HAP-1 (cell line): ENCODE measurements at regions of chr19 and their contacts with region 1.

Region 1: DNA sequence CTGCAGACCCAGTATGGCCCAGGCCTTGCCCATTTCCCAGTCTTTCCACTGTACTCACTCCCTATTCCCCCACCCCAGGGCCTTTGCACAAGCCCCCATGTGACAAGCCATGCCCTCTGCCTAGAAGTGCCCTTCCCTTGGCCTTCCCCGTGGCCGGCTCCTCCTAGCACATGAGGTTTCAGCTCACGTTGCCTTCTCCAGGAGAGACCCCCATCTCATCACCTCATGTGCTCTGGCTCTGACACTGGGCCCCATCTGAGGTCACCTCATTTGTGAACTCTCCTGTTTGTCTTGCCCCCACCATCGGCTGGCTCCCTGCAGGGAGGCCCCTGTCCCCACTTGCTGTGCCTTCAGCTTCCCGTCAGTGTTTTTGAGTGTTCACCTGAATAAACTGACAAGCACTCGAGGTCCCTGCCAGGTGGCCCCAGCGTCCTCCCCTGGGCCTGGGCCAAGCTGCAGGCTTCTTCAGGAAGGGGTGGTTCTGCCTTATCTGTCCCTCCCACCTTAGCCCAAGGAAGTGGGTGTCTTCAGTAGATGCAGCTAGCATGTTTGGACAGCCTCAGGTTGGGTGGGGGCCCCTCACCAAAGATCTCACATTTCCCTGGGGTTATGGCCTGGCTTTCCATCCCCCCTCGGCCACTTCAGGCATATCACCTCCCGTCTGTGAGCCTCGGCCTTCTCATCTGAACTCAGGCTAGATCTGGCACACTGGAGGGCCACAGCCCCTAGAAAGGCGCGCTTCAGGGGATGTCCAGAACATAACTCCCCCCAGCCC is 3.8 kb upstream of the SLC25A42 start:
- DNase-seq: no peak
- H3K4me3 ChIP-seq: no peak overlapping the region
- H3K4me1 ChIP-seq: peaks cover 7% of the 10 kb centered on the region
- H3K27me3 ChIP-seq: no peaks in the 10 kb centered on the region

Region 2: GRCh38 chr19:18450931-18451845 is 608.8 kb before region 1 on chr19:
- in situ Hi-C with region 1: no loop called
- DNase-seq: peak; percentile 50 to 93
- H3K4me3 ChIP-seq: no peak overlapping the region
- H3K4me1 ChIP-seq: no peaks in the 10 kb centered on the region
- H3K27me3 ChIP-seq: no peaks in the 10 kb centered on the region

Region 3: DNA sequence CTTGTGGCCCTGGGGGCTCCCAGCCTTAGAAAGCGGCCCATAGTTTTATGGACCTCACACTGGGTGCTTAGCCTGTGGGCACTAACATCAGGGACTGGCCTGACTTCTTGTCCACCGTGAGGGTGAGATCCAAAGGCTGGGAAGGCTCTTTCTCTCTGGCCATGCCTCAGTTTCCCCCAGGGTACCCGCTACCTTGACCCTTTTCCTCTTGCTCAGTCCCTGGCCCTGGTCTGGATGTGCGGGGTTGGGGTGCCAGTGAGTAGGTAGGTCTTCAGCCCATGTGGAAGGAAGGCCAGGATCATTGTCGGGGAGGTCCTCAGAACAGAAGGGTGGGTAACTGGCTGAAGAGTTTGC is 79.8 kb after region 1 on chr19:
- in situ Hi-C with region 1: loop called (anchors 5 kb)
- DNase-seq: no peak
- H3K4me3 ChIP-seq: no peak overlapping the region
- H3K4me1 ChIP-seq: 0 out of 2 replicates have a peak, but pooled peaks cover 4% of the 10 kb centered on the region
- H3K27me3 ChIP-seq: no peaks in the 10 kb centered on the region